ENCODE measurements at regions of chr12 and their contacts with region 1.

Region 1: DNA sequence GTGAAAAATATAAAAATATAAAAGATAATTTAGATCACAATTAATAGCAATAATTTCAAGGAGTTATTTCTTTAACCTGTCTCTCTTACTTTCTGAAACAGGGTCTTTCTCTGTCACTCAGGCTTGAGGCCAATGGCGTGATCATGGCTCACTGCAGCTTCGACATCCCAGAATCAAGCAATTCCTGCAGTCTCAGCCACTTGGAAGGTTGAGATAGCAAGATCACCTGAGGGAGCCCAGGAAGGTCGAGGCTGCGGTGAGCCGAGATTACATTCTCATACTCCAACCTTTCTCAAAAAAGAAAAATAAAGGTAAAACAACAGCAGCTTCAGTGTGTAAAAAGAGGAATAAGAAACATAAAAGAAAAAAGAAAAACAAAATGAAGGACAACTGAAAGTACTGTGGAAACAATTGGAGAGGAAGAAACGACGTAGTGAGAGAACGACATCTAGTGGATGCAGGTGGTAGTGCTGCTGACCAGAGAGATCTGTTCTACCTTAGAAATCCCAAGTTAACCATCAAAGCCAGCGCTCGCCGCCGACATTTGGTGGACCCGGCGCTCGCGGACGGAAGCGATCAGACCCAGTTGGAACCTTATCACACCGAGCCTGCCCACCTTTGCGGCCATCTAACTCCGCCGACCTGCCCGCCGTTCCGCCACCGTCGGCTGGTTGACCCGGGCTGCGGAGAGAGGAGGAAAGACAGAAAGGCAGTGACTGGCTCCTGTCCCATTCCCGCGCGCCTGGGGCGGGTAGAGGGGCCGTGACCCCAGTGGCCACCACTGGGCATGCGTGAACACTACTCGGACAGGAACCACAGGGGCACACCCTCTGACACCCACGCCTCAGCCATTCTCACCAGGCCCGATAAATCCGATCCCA is 196.1 kb downstream of the ALG10 start:
- DNase-seq: peak; percentile 50
- H3K4me3 Mint-ChIP-seq: peak overlapping the region; percentile 59
- H3K27ac Mint-ChIP-seq: peak overlapping the region; percentile 72
- H3K4me1 Mint-ChIP-seq: peaks cover 8% of the 10 kb centered on the region
- H3K27me3 Mint-ChIP-seq: no peaks in the 10 kb centered on the region
- CTCF ChIP-seq: peak; percentile 77

Region 2: DNA sequence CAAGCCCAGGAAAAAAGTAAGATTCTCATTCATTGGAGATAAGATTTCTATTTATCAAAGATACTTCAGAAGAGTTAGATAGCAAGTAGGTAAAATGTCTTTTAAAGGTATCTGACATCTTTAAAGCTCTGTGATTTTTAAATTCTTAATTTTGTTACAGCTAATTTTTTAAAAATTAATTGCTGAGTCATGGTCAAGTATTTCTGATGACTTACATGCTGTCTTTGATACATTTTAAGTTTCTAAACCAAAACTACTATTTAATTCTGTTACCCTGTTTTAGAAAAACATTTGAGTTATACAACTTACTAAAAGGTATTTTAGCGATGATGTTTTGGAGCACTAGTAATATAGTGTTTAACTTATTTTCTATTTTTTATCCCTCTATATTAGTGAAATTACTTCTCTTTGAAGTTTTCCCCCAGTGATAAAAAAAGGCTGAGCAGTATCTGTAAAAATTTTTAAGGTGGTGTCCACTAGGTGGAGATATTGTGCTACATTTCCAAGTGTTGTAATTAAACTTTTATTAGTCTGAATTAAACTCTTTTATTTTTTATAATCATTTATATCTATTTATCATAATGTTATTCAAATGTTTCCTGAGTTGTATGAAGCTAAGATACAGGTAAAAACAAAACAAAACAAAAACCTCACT is 184.7 kb before region 1 on chr12:
- CTCF ChIA-PET with region 1: interaction called, 6 read pairs
- POLR2A ChIA-PET with region 1: no interaction called
- intact Hi-C with region 1: loop called (anchors 2 kb)
- DNase-seq: peak; percentile 39
- H3K4me3 Mint-ChIP-seq: no peak overlapping the region
- H3K27ac Mint-ChIP-seq: no peak overlapping the region
- H3K4me1 Mint-ChIP-seq: no peaks in the 10 kb centered on the region
- H3K27me3 Mint-ChIP-seq: no peaks in the 10 kb centered on the region
- CTCF ChIP-seq: peak; percentile 58

Region 3: GRCh38 chr12:34126239-34126641 is 92.2 kb before region 1 on chr12:
- CTCF ChIA-PET with region 1: interaction called, 20 read pairs
- POLR2A ChIA-PET with region 1: no interaction called
- intact Hi-C with region 1: loop called (anchors 1 kb)
- DNase-seq: no peak
- H3K4me3 Mint-ChIP-seq: peak overlapping the region; percentile 31
- H3K27ac Mint-ChIP-seq: peak overlapping the region; percentile 24
- H3K4me1 Mint-ChIP-seq: peaks cover 7% of the 10 kb centered on the region
- H3K27me3 Mint-ChIP-seq: no peaks in the 10 kb centered on the region
- CTCF ChIP-seq: no peak

Region 4: GRCh38 chr12:34233618-34234017 is 15.2 kb after region 1 on chr12:
- CTCF ChIA-PET with region 1: interaction called, 13 read pairs
- POLR2A ChIA-PET with region 1: no interaction called
- intact Hi-C with region 1: no loop called
- DNase-seq: no peak
- H3K4me3 Mint-ChIP-seq: no peak overlapping the region
- H3K27ac Mint-ChIP-seq: no peak overlapping the region
- H3K4me1 Mint-ChIP-seq: no peaks in the 10 kb centered on the region
- H3K27me3 Mint-ChIP-seq: no peaks in the 10 kb centered on the region
- CTCF ChIP-seq: no peak

Region 5: DNA sequence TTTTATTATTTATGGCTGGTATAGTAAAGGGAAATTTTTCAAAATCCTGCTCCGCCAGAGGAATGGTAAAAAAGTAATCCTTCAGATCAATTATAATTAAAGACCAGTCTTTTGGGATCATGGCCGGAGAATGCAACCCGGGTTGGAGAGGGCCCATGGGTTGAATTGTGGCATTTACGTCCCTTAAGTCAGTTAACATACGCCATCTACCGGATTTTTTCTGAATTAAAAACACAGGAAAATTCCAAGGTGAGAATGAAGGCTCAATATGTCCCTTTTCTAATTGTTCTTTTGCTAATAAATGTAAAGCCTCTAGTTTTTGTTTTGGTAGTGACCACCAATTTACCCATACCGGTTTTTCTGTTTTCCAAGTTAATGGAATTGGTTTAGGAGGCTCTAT is 406.7 kb after region 1 on chr12:
- CTCF ChIA-PET with region 1: interaction called, 3 read pairs
- POLR2A ChIA-PET with region 1: no interaction called
- intact Hi-C with region 1: loop called (anchors 2 kb)
- DNase-seq: peak; percentile 37
- H3K4me3 Mint-ChIP-seq: no peak overlapping the region
- H3K27ac Mint-ChIP-seq: no peak overlapping the region
- H3K4me1 Mint-ChIP-seq: no peaks in the 10 kb centered on the region
- H3K27me3 Mint-ChIP-seq: no peaks in the 10 kb centered on the region
- CTCF ChIP-seq: peak; percentile 37